Activated CD4-positive, alpha-beta T cell treated with anti-CD3 and anti-CD28 coated beads, Interleukin-2, amount 10 ng/mL, durations not matched to agents 24 days and 14 days (primary cell): ENCODE measurements at regions of chr4 and their contacts with region 1.

Region 1: DNA sequence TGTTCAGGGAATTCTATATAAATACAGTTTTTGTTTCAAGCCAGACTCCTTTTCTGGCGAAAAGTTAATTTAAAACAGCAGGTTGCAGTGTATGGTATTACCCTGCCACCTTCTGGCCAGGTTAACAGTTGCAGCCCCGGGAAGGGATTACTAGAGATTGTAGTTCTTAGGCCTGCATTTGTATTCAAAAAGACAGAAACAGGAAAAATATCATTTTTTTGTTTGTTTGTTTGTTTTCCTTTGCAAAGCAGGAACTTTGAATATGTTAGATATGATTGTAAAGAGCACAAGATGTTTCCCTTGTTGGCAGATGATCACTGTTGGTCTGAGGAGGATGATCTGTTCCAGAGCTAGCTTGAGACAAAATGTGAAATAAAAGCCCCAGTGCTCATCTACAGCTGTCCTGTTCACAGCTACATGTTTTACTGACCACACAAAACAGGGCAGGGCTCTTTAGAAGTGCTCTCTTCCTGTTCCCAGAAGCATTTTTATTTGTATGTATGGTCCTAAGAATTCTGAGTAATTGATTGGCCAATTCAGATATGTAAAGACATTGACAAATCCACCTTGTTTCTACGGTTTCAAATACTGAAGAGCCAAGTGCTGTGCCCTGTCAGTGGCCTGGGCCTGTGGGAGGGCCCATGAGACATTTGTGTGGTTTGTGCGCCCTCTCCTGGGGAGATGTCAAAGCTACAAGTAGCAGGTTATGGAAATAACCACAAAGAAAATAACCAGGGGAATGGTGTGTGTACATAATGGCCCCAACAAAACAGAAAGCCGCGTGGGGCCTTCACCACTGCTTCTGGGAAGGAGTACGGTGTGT is 57.9 kb downstream of the CLDN22 start:
- DNase-seq: peak; percentile 92
- H3K4me3 Mint-ChIP-seq: no peak overlapping the region
- H3K27ac Mint-ChIP-seq: peak overlapping the region; percentile 60
- H3K4me1 Mint-ChIP-seq: peaks cover 7% of the 10 kb centered on the region
- H3K27me3 Mint-ChIP-seq: peaks cover 8% of the 10 kb centered on the region

Region 2: DNA sequence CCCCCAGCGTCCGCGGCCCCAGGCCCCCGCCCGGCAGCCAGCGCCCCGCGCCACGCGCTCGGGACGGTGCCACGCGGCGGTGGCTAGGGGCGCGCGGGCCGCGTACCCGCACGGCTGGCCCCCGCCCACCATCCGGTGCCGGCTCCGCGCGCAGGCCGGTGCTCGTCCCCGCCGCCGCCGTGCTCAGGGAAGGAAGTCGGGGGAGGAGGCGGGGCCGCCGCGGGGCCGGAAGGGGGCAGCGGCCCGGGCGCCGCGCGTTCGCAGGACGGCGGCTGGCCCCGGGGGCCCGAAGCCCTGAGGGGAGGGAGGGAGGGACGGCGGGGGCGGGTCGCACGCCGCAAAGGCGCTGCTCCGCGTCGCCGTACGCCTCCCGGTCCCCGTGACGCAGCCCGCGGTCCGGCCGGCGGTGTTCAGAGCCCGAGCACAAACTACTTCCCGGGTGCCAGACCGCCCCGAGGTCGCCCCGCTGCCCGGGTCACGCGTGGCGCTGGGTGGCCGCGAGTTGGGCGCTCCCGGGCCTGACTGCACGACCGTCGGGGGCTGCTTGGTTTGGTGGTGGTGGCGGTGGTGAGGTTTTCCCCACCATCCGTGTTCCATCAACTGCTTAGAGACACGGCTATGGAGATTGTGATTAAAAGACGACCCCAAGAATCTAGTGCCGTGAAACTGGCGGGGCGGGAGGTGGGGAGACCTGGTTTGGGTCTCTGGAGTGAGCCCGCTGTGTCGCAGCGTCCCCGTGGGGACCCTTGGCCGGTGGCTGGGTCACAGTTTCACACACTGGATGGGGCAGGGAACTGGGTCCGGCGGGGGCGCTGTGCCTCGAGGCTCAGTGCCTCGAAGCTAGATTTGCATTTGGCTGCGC is 344.8 kb before region 1 on chr4 and contains the start of gene DCTD:
- intact Hi-C with region 1: loop called (anchors 5 kb)
- DNase-seq: peak; percentile 95
- H3K4me3 Mint-ChIP-seq: peak within 1 kb of the TSS; percentile 87
- H3K27ac Mint-ChIP-seq: peak within 1 kb of the TSS; percentile 93
- H3K4me1 Mint-ChIP-seq: peaks cover 44% of the 10 kb centered on the region
- H3K27me3 Mint-ChIP-seq: peaks cover 5% of the 10 kb centered on the region
- total RNA-seq, gene DCTD: 125 and 129 TPM in 2 replicates

Region 3: DNA sequence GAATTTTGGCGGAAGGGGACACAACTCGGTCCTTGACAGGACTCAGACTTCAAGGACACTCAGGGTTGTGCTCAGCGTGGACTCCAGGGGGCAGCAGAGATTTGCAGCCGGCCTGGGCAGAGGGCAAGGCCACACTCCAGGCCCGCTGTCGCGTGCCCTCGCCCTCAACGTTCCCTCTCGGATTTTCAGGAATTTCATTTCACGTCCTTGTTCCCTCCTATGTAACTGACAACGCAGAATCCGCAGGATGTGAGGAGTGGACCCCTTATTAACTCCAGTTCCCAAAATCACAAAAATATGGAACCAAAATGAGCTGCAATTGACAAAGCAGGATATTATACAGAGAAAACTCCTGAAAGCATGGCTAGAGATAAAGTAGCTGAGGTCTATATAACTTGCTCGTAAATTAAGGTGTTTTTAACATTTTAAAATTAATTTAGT is 323.9 kb before region 1 on chr4:
- intact Hi-C with region 1: loop called (anchors 1 kb)
- DNase-seq: peak; percentile 90
- H3K4me3 Mint-ChIP-seq: no peak overlapping the region
- H3K27ac Mint-ChIP-seq: no peak overlapping the region
- H3K4me1 Mint-ChIP-seq: peaks cover 3% of the 10 kb centered on the region
- H3K27me3 Mint-ChIP-seq: peaks cover 6% of the 10 kb centered on the region

Region 4: DNA sequence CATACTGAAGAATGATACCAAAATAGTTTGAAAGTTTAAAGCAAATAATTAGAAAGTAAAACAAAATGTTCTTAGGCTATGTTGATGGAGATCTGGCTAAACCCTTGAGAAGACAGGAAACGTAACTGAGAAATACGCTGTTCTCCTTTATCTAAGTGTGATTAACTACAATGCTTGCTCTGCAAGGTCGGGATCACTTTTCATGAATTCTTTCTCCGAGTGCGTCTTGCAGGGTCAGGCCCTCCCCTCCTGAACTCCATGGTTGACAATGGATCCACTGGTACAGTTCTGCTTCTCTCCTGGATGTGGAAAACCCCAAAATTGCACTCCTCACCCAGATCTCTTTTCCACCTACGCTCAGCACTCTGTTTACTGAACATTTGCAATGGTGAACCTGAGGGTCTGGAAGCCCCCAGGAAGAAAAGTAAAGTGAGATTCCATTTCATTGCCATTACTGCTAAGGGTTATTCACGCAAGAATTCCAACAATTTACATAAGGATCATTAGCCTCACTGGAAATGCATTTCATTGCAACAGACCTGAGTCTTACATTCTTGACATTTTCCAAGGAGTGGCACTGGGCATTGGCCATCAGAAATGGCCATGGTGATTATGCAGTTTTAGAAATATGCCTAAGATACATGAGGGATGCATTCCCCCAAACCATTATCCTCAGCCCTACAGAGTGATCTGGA is 187.7 kb before region 1 on chr4:
- intact Hi-C with region 1: loop called (anchors 1 kb)
- DNase-seq: no peak
- H3K4me3 Mint-ChIP-seq: no peak overlapping the region
- H3K27ac Mint-ChIP-seq: no peak overlapping the region
- H3K4me1 Mint-ChIP-seq: peaks cover 1% of the 10 kb centered on the region
- H3K27me3 Mint-ChIP-seq: peaks cover 18% of the 10 kb centered on the region

Region 5: GRCh38 chr4:183214912-183215488 is 47.2 kb before region 1 on chr4:
- intact Hi-C with region 1: no loop called
- DNase-seq: no peak
- H3K4me3 Mint-ChIP-seq: no peak overlapping the region
- H3K27ac Mint-ChIP-seq: no peak overlapping the region
- H3K4me1 Mint-ChIP-seq: no peaks in the 10 kb centered on the region
- H3K27me3 Mint-ChIP-seq: no peaks in the 10 kb centered on the region

Region 6: DNA sequence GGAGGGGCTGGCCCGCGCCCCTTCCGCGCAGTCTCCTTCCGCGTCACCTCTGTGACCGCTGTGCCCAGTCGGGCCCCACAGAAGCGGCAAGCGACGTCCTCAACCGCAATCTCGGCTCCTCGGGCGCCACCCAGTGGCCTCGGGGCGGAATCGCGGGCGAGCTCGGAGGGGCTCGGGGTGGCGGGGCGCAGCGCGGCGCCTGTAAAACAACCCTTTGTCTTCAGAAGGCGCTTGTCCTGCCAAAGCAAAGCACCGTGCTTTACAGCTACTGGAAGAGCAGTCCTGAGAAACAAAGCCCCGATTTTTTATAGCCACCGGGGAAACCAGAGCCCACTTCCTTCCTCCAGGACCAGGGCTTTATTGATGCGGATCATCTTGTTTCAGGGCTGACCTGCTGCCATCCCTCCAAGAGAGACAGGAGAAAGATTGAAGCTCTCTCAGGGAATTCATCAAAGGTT is 145.0 kb after region 1 on chr4:
- intact Hi-C with region 1: loop called (anchors 5 kb)
- DNase-seq: peak; percentile 97
- H3K4me3 Mint-ChIP-seq: peak overlapping the region; percentile 80
- H3K27ac Mint-ChIP-seq: peak overlapping the region; percentile 52
- H3K4me1 Mint-ChIP-seq: peaks cover 9% of the 10 kb centered on the region
- H3K27me3 Mint-ChIP-seq: peaks cover 2% of the 10 kb centered on the region